Activated CD4-positive, alpha-beta T cell treated with anti-CD3 and anti-CD28 coated beads for 36 hours (primary cell): ENCODE measurements at regions of chr16 and their contacts with region 1.

Region 1: DNA sequence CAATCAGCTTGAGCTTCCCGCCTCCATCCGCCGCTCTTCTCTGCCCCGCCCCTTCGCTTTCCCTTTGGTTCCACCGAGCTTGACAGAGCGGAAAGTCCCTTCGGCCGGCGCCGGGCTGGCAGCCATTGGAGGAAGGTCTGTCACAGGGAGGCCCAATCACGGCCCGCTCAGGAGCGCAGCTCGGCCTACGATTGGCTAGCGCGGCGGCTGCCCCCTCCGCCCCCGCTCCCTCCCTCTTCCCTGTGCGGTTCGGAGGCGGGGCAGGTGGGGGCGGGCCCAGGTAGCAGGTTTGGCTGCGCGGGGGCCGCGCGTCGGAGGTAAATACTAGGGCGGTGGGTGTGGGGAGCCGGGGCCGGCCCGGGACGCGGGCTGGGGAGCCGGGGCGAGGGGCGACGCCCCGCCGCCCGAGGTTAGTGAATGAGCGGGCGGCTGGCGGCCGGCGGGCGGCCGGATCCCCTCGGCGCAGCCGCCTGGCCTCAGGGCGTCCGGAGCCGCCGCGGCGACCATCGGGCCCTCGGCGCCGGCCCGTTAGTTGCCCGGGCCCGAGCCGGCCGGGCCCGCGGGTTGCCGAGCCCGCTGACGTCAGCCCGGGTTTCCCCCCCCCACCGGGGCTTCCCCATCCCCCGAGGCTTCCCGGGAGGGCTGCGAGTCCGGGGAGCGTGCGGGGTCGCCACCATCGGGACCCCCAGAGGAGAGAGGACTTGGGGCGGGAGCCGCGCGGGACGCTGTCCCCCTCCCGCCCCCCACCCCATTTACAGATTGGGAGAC is at the start of gene CYLD:
- DNase-seq: peak; percentile 100
- ATAC-seq: peak; percentile 91
- H3K4me3 Mint-ChIP-seq: peak within 1 kb of the TSS; percentile 93
- H3K27ac Mint-ChIP-seq: peak within 1 kb of the TSS; percentile 95
- H3K4me1 Mint-ChIP-seq: peaks cover 42% of the 10 kb centered on the region
- H3K27me3 Mint-ChIP-seq: no peaks in the 10 kb centered on the region
- total RNA-seq, gene CYLD: 72.4 to 92.8 TPM

Region 2: GRCh38 chr16:50065624-50066481 is 676.1 kb before region 1 on chr16 and contains the start of gene HEATR3:
- CTCF ChIA-PET with region 1: no interaction called
- POLR2A ChIA-PET with region 1: no interaction called
- intact Hi-C with region 1: loop called in 1 of 2 experiments (anchors 1 kb)
- DNase-seq: peak; percentile 97
- ATAC-seq: peak; percentile 86
- H3K4me3 Mint-ChIP-seq: peak within 1 kb of the TSS; percentile 87
- H3K27ac Mint-ChIP-seq: peak within 1 kb of the TSS; percentile 88
- H3K4me1 Mint-ChIP-seq: peaks cover 33% of the 10 kb centered on the region
- H3K27me3 Mint-ChIP-seq: no peaks in the 10 kb centered on the region
- total RNA-seq, gene HEATR3: 22.2 to 28.7 TPM

Region 3: DNA sequence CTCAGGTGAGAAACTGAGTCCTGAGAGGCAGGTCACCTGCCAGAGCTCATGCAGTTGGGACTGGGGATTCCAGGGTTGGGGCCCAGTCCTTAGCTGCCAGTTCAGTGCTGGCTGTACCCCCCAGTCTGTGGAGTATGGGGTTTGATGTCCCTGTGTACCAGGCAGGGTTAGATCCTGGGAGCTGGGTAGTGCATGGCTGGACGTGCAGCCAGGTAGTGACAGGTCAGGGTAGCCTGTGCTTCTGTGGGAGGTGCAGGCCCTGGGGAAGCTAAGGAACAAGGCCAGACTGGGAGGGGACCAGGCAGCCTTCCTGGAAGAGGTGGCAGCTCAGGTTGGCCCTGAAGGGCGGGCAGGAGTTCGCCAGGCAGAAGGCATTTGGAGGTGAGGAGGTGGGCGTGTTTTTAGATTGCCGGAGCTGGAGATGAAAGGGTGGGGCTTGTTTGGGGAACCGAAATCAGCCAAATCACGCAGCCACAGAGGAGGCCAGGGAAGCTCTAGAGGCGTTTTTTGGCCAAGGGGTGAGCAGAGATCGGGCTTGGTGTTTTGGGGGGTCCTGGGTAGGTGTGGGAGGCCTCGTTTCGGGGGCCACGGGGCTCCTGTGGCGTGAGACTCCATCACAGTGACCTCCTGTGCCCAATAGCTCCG is 468.2 kb before region 1 on chr16:
- CTCF ChIA-PET with region 1: interaction called, 3 read pairs
- POLR2A ChIA-PET with region 1: interaction called, 3 read pairs
- intact Hi-C with region 1: loop called (anchors 2 kb)
- DNase-seq: peak; percentile 73
- ATAC-seq: peak; percentile 37
- H3K4me3 Mint-ChIP-seq: peak overlapping the region; percentile 97
- H3K27ac Mint-ChIP-seq: peak overlapping the region; percentile 100
- H3K4me1 Mint-ChIP-seq: peaks cover 92% of the 10 kb centered on the region
- H3K27me3 Mint-ChIP-seq: no peaks in the 10 kb centered on the region

Region 4: GRCh38 chr16:50585331-50585776 is 156.6 kb before region 1 on chr16:
- CTCF ChIA-PET with region 1: no interaction called
- POLR2A ChIA-PET with region 1: no interaction called
- intact Hi-C with region 1: loop called in 1 of 2 experiments (anchors 5 kb)
- DNase-seq: no peak
- ATAC-seq: no peak
- H3K4me3 Mint-ChIP-seq: no peak overlapping the region
- H3K27ac Mint-ChIP-seq: no peak overlapping the region
- H3K4me1 Mint-ChIP-seq: peaks cover 35% of the 10 kb centered on the region
- H3K27me3 Mint-ChIP-seq: no peaks in the 10 kb centered on the region

Region 5: GRCh38 chr16:50681021-50681885 is 60.7 kb before region 1 on chr16 and contains the start of gene SNX20:
- CTCF ChIA-PET with region 1: interaction called, 298 read pairs
- POLR2A ChIA-PET with region 1: interaction called, 6 read pairs
- intact Hi-C with region 1: loop called (anchors 1 to 2 kb)
- DNase-seq: peak; percentile 80
- ATAC-seq: peak; percentile 69
- H3K4me3 Mint-ChIP-seq: peak within 1 kb of the TSS; percentile 78
- H3K27ac Mint-ChIP-seq: peak within 1 kb of the TSS; percentile 94
- H3K4me1 Mint-ChIP-seq: peaks cover 85% of the 10 kb centered on the region
- H3K27me3 Mint-ChIP-seq: no peaks in the 10 kb centered on the region
- total RNA-seq, gene SNX20: 43.3 to 48.9 TPM

Region 6: GRCh38 chr16:50696575-50697420 is 45.2 kb before region 1 on chr16:
- CTCF ChIA-PET with region 1: interaction called, 7 read pairs
- POLR2A ChIA-PET with region 1: interaction called, 4 read pairs
- intact Hi-C with region 1: loop called (anchors 1 to 5 kb)
- DNase-seq: peak; percentile 81
- ATAC-seq: peak; percentile 51
- H3K4me3 Mint-ChIP-seq: peak overlapping the region; percentile 71
- H3K27ac Mint-ChIP-seq: peak overlapping the region; percentile 88
- H3K4me1 Mint-ChIP-seq: peaks cover 83% of the 10 kb centered on the region
- H3K27me3 Mint-ChIP-seq: no peaks in the 10 kb centered on the region